ENCODE measurements at regions of chr19 and their contacts with region 1.

Region 1: DNA sequence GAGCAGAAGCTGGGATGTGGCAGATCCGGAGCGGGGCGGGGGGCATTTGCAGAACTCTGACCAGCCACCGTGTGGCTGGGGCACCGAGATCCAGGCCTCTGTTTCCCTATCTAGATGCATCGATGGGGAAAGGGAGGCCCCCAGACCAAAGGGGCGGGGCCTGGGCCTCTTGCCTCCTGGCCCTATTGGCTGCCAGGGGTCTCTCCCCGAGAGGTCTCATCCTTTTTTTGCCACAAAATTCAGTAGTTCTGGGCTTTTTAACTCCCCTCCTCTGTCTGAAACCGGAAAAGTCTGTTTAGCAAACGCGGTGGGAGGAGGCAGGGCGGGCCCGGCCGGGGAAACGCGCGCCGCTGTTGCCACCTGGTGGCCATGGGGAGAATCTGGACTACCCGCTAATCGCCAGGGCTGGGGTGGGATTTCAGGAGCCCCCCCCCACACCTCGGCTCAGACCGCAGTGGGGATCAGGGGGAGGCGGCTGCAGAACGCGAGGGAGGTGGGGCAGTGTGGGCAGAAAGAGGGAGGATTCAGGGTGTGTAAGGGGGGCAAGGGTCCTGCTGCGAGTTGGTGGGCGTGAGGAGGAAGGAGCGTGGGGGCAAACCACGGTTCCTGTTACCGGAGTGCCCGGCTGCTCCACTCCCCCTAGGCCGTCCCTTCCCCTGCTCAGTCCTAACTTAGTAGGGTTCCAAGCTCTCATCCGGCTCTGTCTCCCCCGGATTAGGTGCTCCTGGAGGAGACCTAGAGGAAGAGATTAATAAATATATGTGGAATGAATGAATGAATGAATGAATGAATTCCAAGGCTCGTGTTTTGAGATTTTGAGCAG is 28.3 kb downstream of the IL12RB1 start:
- DNase-seq: peak; percentile 81 to 94
- H3K4me3 ChIP-seq: peak overlapping the region in 3 of 4 donors; percentile 22 to 36 (median 29)
- H3K27ac ChIP-seq: peak overlapping the region; percentile 73 to 87 (median 80)
- H3K4me1 ChIP-seq: peaks cover 10 to 19% (median 14%) of the 10 kb centered on the region in 4 donors
- H3K27me3 ChIP-seq: peaks cover 0 to 9% (median 0%) of the 10 kb centered on the region in 3 donors
- CTCF ChIP-seq: peak in 5 of 7 experiments; percentile 84 to 97 (median 95)
- EP300 ChIP-seq: no peak
- POLR2A ChIP-seq: no peak

Region 2: GRCh38 chr19:18007044-18007916 is 51.1 kb before region 1 on chr19:
- intact Hi-C with region 1: loop called (anchors 2 kb)
- DNase-seq: peak; percentile 87 to 94
- H3K4me3 ChIP-seq: peak overlapping the region; percentile 52 to 66 (median 60)
- H3K27ac ChIP-seq: peak overlapping the region; percentile 77 to 88 (median 85)
- H3K4me1 ChIP-seq: peaks cover 30 to 67% (median 46%) of the 10 kb centered on the region in 4 donors
- H3K27me3 ChIP-seq: no peaks in the 10 kb centered on the region
- CTCF ChIP-seq: peak in 6 of 7 experiments; percentile 83 to 98 (median 97)
- EP300 ChIP-seq: no peak
- POLR2A ChIP-seq: peak in 1 of 4 donors; percentile 19